ENCODE measurements at regions of chr7 and their contacts with region 1.

Region 1: DNA sequence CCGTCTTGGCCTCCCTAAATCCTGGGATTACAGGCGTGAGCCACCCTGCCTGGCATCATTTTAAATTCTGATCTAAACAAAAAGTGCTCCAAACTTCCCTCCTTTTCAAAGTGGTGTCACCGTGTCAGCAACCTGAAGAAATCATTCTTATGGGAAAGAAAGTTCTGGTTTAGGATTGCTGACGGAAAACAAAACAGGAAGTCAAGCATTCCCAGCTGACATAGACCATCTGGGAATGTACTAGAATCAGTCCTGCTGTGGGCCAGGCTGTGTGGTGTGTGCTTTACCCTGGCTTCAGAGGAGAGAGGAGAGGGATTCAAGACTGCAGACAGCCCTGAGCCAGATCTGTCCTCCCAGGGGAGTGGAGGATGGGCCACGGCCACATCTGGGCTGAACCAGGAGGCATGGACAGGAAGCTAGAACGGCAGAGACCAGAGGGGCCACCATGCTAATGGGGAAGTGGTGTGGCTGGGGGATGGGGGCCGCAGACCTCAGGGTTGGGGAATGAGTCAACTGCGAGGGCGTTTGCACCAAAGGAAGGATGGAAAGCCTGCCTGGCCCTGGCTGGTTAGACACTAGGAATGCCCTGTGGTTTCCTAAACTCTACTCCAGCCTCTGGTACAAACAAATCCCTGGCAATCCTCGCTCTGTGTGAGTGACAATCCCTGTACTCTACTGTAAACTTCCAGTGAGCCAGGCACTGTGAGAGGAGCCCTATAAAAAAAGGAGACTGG is 16.7 kb upstream of the CLIP2 start:
- DNase-seq: peak; percentile 67
- H3K4me3 ChIP-seq: no peak overlapping the region
- H3K27ac ChIP-seq: no peak overlapping the region
- H3K4me1 ChIP-seq: peaks cover 19% of the 10 kb centered on the region
- H3K27me3 ChIP-seq: no peaks in the 10 kb centered on the region
- CTCF ChIP-seq: no peak

Region 2: DNA sequence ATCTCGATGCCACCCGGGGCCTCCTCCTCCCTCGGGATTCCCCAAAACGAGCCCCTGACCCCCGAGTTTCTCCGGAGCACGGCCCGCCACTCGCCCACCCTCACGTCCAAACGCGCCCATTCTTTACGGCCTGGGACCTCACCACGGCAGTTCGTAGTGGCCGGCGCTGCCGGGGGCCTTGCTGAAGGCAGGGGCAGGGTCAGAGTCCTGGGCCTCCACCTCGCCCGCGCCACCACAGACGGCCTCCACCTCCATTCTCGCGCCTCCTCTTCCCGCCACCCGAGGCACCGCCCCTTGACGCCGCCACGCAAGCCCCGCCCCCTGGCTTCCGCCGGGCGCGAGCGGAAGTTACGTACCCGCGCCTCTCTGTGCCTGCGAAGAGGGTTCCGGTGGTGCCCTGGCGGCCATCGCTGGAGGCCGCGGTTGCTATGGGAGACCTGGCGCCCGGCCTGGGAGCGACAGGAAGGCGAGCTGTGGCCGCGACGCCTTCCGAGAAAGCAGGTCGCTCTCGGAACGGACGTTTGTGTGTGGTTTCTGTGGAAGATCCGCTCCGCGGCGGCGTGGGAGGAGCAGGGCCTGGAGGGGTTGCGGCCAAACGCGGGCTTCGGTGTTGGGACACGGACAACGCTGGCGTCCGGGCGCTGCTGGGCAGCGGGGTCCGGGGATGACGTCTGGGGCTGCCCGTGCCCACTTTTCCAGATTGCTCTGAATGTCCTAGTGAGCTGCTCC is 18.2 kb before region 1 on chr7 and contains the start of gene RFC2:
- CTCF ChIA-PET with region 1: interaction called, 37 read pairs
- dilution Hi-C with region 1: no loop called
- in situ Hi-C with region 1: no loop called
- intact Hi-C with region 1: no loop called
- DNase-seq: peak; percentile 95
- H3K4me3 ChIP-seq: peak within 1 kb of the TSS; percentile 81 to 97 (median 88)
- H3K27ac ChIP-seq: peak within 1 kb of the TSS; percentile 91
- H3K4me1 ChIP-seq: peaks cover 8% of the 10 kb centered on the region
- H3K27me3 ChIP-seq: no peaks in the 10 kb centered on the region
- CTCF ChIP-seq: no peak
- total RNA-seq, gene RFC2: 15.0 to 43.9 TPM

Region 3: DNA sequence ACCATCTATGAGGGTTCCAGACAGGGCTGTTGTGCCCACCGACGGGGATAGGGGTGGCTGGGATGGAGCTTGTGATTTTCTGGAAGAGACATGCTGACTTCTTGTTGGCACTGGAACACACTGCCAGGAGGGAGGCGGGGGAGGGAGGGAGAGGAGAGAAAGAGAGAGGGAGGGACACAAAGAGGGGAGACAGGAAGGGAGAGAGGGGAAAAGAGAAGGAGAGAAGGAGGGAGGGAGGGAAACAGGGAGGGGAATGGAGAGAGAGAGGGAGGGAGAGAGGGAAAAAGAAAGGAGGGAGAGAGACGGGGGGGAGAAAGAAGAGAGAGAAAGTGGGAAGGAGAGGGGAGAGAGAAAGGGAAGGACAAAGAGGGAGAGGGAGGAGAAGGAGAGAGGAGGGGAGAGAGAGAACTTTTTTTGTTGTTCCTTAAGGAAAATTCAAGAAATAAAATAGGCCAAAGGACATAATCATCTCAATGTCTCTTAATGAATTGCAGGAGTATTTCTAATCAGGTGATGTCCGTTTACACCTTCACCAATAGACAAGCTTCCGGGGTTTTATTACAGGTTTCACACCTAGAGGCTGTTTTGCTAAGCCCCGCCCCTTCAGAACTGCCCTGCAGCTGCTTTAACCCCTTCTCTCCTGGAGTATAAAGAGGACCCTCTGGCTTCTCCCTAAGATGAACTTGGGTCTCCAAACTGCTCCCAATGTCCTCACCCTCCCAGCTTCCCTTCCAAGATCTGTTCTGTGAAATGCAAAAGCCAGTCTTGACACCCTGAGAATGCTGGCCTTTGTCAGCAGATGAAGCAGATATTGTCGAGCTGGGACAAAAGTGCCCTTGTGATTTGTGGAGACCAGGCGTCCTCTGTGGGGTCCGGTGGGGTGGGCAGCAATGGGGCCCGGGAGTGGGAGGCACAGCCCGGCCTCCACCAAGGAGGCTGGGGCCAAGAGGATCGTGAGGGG is 99.2 kb after region 1 on chr7:
- CTCF ChIA-PET with region 1: no interaction called
- dilution Hi-C with region 1: loop called (anchors 5 kb)
- in situ Hi-C with region 1: loop called in 1 of 2 experiments (anchors 25 kb)
- intact Hi-C with region 1: no loop called
- DNase-seq: no peak
- H3K4me3 ChIP-seq: no peak overlapping the region
- H3K27ac ChIP-seq: no peak overlapping the region
- H3K4me1 ChIP-seq: no peaks in the 10 kb centered on the region
- H3K27me3 ChIP-seq: no peaks in the 10 kb centered on the region
- CTCF ChIP-seq: no peak